Activated B cell treated with CpG ODN at 0.5 μM for 24 hours (primary cell): ENCODE measurements at regions of chr11 and their contacts with region 1.

Region 1: GRCh38 chr11:46889689-46890475 is 28.5 kb downstream of the LRP4 start:
- DNase-seq: peak; percentile 36
- ATAC-seq: peak; percentile 99
- H3K4me3 Mint-ChIP-seq: no peak overlapping the region
- H3K27ac Mint-ChIP-seq: no peak overlapping the region
- H3K4me1 Mint-ChIP-seq: peaks cover 5% of the 10 kb centered on the region
- H3K27me3 Mint-ChIP-seq: peaks cover 6% of the 10 kb centered on the region
- CTCF ChIP-seq: peak; percentile 80

Region 2: GRCh38 chr11:46876471-46876870 is 13.4 kb before region 1 on chr11:
- CTCF ChIA-PET with region 1: no interaction called
- POLR2A ChIA-PET with region 1: no interaction called
- intact Hi-C with region 1: no loop called
- DNase-seq: no peak
- ATAC-seq: no peak
- H3K4me3 Mint-ChIP-seq: no peak overlapping the region
- H3K27ac Mint-ChIP-seq: no peak overlapping the region
- H3K4me1 Mint-ChIP-seq: no peaks in the 10 kb centered on the region
- H3K27me3 Mint-ChIP-seq: peaks cover 4% of the 10 kb centered on the region
- CTCF ChIP-seq: no peak

Region 3: GRCh38 chr11:46951864-46952263 is 62.0 kb after region 1 on chr11:
- CTCF ChIA-PET with region 1: no interaction called
- POLR2A ChIA-PET with region 1: no interaction called
- intact Hi-C with region 1: no loop called
- DNase-seq: no peak
- ATAC-seq: no peak
- H3K4me3 Mint-ChIP-seq: no peak overlapping the region
- H3K27ac Mint-ChIP-seq: no peak overlapping the region
- H3K4me1 Mint-ChIP-seq: no peaks in the 10 kb centered on the region
- H3K27me3 Mint-ChIP-seq: no peaks in the 10 kb centered on the region
- CTCF ChIP-seq: no peak

Region 4: DNA sequence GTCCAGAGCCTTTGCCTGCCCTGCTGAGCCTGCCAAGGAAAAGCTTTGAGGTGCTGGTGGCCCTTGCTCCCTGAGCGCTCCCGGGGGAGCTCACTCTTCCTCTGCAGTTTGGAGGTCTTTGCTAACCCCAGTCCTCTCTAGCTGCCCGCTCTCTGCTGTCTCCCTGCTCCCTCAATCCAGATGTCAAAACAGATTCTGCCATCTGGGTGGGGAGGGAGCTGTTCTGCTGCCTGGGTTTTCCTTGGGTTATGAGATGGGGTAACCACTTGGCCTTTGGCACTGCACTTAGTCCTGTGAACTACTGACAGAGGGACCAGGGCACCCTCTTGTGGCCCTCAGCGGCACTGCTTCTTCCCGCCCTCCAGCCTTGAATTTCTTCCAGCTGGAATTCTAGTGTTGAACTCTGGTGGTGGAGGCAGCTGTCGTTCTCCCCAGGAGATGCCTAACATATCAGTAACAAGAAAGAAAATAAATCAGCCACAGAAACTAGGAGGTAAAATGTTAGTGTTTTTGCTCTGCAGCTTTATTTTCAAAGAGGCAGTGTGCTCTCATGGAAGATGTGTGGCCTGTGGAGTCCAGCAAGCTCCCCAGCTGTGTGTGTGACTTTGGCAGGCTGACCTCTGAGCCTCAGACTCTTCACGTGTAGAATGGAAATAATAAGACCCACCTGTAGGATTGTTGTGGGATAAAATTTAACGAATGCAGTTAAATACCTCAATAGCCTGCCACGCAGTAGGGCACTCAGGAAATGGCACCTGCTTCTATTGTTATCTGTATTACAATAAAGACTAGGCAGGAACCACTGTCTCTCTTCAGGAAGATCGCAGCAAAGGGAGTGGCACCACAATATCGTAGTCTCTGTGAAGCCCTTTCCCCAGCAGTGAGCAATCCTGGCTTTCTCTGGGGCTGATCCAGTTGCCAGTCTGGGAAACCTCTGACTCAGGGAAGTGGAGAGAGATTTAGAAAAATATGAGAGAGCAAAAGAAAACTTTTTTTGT is 263.4 kb after region 1 on chr11:
- CTCF ChIA-PET with region 1: interaction called, 27 read pairs
- POLR2A ChIA-PET with region 1: no interaction called
- intact Hi-C with region 1: loop called (anchors 1 kb)
- DNase-seq: peak; percentile 46
- ATAC-seq: peak; percentile 86
- H3K4me3 Mint-ChIP-seq: peak overlapping the region; percentile 9
- H3K27ac Mint-ChIP-seq: peak overlapping the region; percentile 27
- H3K4me1 Mint-ChIP-seq: peaks cover 38% of the 10 kb centered on the region
- H3K27me3 Mint-ChIP-seq: no peaks in the 10 kb centered on the region
- CTCF ChIP-seq: peak; percentile 84

Region 5: GRCh38 chr11:47161134-47161854 is 271.4 kb after region 1 on chr11:
- CTCF ChIA-PET with region 1: interaction called, 3 read pairs
- POLR2A ChIA-PET with region 1: interaction called, 5 read pairs
- intact Hi-C with region 1: loop called (anchors 1 kb)
- DNase-seq: peak; percentile 47
- ATAC-seq: peak; percentile 84
- H3K4me3 Mint-ChIP-seq: no peak overlapping the region
- H3K27ac Mint-ChIP-seq: no peak overlapping the region
- H3K4me1 Mint-ChIP-seq: no peaks in the 10 kb centered on the region
- H3K27me3 Mint-ChIP-seq: no peaks in the 10 kb centered on the region
- CTCF ChIP-seq: peak; percentile 46

Region 6: DNA sequence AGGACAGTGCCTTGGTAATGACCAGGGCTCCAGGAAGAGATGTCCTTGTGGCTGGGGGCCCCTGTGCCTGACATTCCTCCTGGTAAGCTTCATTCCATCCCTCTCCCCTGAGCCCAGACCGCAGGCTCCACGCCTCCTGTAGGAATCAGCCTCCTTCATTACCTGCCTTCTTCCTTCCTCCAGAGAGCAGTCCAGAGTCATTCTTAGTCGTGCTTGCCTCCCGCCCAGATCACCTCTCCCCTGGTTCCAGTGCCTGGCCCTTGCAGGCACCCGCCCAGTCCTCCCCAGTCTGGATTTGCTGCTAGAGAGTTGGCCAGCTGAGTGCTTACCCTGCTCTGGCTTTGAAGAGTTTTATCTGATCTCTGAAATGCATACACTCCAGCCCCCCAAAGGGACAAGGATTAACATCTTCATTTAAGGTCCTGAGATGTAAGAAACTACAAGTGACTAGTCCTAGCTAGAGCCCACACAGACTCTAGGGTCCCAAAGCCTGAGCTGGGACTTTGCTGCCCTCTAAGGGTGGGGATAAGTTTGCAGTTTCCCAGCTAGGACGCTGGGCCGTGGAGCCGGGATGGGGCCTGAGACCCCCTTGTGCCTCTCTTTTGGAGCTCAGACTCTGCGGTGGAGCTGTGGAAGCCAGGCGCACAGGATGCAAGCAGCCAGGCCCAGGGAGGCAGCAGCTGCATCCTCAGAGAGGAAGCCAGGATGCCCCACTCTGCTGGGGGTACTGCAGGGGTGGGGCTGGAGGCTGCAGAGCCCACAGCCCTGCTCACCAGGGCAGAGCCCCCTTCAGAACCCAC is 369.5 kb after region 1 on chr11:
- CTCF ChIA-PET with region 1: no interaction called
- POLR2A ChIA-PET with region 1: no interaction called
- intact Hi-C with region 1: loop called (anchors 1 kb)
- DNase-seq: no peak
- ATAC-seq: peak; percentile 87
- H3K4me3 Mint-ChIP-seq: no peak overlapping the region
- H3K27ac Mint-ChIP-seq: no peak overlapping the region
- H3K4me1 Mint-ChIP-seq: peaks cover 2% of the 10 kb centered on the region
- H3K27me3 Mint-ChIP-seq: no peaks in the 10 kb centered on the region
- CTCF ChIP-seq: no peak

Region 7: GRCh38 chr11:47454180-47454644 is 564.3 kb after region 1 on chr11:
- CTCF ChIA-PET with region 1: interaction called, 3 read pairs
- POLR2A ChIA-PET with region 1: no interaction called
- intact Hi-C with region 1: loop called (anchors 1 kb)
- DNase-seq: peak; percentile 24
- ATAC-seq: peak; percentile 96
- H3K4me3 Mint-ChIP-seq: no peak overlapping the region
- H3K27ac Mint-ChIP-seq: no peak overlapping the region
- H3K4me1 Mint-ChIP-seq: peaks cover 5% of the 10 kb centered on the region
- H3K27me3 Mint-ChIP-seq: no peaks in the 10 kb centered on the region
- CTCF ChIP-seq: no peak